ENCODE measurements at regions of chr4 and their contacts with region 1.

Region 1: DNA sequence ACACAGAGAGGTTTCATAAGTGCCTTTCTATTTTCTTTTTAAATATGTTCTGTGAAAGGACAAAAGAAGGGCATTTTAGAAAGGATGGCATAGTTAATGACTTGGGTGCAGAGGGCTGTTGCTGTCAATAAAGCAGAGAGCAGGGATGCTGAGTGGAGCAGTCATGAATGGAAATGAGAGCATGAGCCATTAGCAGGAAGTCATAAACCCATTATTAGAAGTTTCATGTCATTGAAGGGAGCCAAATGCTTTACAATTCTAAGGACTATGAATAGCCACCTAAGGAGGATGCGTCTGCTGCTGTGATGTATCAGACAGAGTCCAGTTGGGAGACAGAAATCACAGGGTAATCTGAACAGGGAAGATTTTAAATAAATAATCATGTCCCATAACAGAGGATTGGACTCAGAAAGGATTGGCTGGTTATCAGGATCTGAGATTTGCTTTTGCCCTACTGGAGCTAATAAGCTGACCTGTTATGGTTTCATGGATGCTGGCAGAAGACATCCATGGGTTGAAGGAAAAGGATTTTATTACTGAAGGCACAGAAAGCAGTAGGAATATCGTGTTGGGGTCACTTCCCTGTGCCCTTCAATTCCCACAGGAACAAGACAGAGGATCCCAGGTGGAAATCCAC is 47.5 kb upstream of the WDR19 start:
- DNase-seq: no peak
- H3K4me3 Mint-ChIP-seq: no peak overlapping the region
- H3K27ac Mint-ChIP-seq: no peak overlapping the region
- H3K4me1 Mint-ChIP-seq: peaks cover 7% of the 10 kb centered on the region
- H3K27me3 Mint-ChIP-seq: no peaks in the 10 kb centered on the region

Region 2: GRCh38 chr4:38894340-38894982 is 240.3 kb before region 1 on chr4:
- CTCF ChIA-PET with region 1: interaction called, 205 read pairs
- POLR2A ChIA-PET with region 1: no interaction called
- intact Hi-C with region 1: no loop called
- DNase-seq: no peak
- H3K4me3 Mint-ChIP-seq: no peak overlapping the region
- H3K27ac Mint-ChIP-seq: no peak overlapping the region
- H3K4me1 Mint-ChIP-seq: peaks cover 31% of the 10 kb centered on the region
- H3K27me3 Mint-ChIP-seq: peaks cover 4% of the 10 kb centered on the region

Region 3: DNA sequence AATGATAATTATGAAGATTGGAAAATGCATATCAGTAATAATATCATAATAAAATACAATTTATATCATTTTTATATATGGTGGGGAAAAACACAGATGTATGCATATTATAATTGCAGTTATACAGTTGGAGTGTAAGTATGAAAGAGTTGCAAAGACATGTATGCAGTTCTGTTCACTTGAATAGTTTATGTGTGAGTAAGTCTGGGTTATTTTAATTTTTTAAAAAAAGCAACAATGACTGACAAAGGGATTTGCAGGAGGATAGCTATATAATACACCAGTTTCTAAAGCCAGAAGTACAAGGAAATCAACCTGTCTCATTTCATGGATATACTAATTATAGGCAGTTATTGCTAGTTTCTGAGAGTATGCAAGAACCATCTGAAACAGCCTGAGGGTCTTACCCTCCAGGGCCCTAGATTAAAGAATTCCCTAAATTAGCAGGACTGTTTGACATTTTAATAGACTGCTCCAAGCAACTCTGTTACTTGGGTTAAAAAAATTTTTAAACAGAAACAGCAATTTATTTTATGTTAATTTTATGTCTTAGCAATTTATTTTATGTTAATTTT is 227.0 kb before region 1 on chr4:
- CTCF ChIA-PET with region 1: interaction called, 205 read pairs
- POLR2A ChIA-PET with region 1: no interaction called
- intact Hi-C with region 1: loop called (anchors 1 kb)
- DNase-seq: no peak
- H3K4me3 Mint-ChIP-seq: no peak overlapping the region
- H3K27ac Mint-ChIP-seq: no peak overlapping the region
- H3K4me1 Mint-ChIP-seq: peaks cover 3% of the 10 kb centered on the region
- H3K27me3 Mint-ChIP-seq: no peaks in the 10 kb centered on the region

Region 4: DNA sequence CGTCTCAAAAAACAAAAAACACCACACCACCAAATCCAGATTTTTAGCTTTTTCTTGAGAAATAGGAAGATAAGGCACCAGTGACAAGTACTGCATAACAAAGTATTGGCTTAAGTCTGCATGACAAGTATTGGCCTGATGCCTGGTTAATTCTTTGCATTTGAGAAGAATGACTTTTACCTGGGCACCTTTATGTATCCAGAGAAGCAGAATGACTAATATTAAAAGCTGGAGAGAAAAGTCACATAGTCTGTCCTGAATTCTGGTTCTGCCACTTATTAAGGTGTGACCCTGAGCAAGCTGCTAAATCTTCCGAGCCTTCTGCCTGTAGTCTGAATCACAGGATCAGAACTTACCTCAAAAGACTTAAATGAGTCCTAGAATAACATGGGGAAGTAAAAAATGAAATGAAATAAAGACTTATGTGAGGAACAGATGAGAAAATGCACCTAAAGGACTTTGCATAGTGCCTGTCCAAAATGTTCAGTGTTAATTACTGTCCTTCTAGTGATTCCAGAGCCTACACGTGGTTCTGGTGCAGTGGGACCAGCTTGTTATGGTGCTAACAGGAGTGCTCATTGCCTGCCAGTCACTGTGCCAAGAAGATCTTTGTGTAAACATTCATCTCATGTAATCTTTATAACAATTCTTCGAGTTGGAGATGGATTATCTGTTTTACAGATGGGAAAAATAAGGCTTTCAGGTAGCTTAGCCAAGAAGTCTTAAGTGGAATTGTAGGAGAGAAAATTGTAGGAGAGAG is 360.8 kb after region 1 on chr4:
- CTCF ChIA-PET with region 1: no interaction called
- POLR2A ChIA-PET with region 1: no interaction called
- intact Hi-C with region 1: no loop called
- DNase-seq: no peak
- H3K4me3 Mint-ChIP-seq: no peak overlapping the region
- H3K27ac Mint-ChIP-seq: no peak overlapping the region
- H3K4me1 Mint-ChIP-seq: no peaks in the 10 kb centered on the region
- H3K27me3 Mint-ChIP-seq: no peaks in the 10 kb centered on the region

Measured in activated CD4-positive, alpha-beta memory T cell treated with anti-CD3 and anti-CD28 coated beads for 36 hours (primary cell).